Mucosa of descending colon (tissue), 3 donors: ENCODE measurements at regions of chr3 and their contacts with region 1.

Region 1: DNA sequence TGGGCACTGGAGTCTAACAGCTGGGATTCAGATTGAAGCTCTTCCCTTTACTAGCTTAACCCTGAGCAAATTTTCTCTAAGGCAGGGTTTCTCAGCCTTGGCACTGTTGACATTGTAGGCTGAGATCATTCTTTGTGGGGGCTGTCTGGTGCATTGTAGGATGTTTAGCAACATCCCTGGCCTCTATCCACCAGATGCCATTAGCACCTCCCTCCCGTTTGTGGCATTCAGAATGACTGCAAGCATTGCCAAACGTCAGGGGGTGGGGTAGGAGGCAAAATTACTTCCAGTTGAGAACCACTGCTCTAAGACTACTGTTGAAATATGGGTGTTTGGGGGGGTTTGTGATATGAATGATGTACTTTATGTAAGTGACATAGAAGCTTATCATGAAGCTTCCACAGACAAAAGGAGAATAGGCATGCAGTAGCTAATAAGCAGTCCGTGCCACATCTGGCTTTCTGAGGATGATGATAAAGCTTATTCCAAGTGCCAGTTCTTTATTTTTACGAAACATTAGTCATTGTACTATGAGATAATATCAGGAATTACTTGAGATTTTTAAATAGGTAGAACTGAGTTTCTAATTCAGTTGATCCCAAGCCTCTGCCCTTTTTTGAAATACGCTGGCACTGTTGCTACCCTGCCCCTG is 39.3 kb downstream of the NKIRAS1 start:
- DNase-seq: no peak
- ATAC-seq: peak; percentile 15
- H3K4me3 ChIP-seq: no peak overlapping the region
- H3K4me1 ChIP-seq: peaks cover 8% of the 10 kb centered on the region
- CTCF ChIP-seq: no peak

Region 2: GRCh38 chr3:23372285-23372684 is 505.2 kb before region 1 on chr3:
- intact Hi-C with region 1: no loop called
- DNase-seq: no peak
- ATAC-seq: no peak
- H3K4me3 ChIP-seq: no peak overlapping the region
- H3K4me1 ChIP-seq: no peaks in the 10 kb centered on the region
- CTCF ChIP-seq: no peak

Region 3: GRCh38 chr3:23435318-23435717 is 442.1 kb before region 1 on chr3:
- intact Hi-C with region 1: loop called in 1 of 2 experiments (anchors 10 kb)
- DNase-seq: no peak
- ATAC-seq: no peak
- H3K4me3 ChIP-seq: no peak overlapping the region
- H3K4me1 ChIP-seq: no peaks in the 10 kb centered on the region
- CTCF ChIP-seq: no peak